Ascending aorta (tissue), 2 donors: ENCODE measurements at regions of chr11 and their contacts with region 1.

Region 1: DNA sequence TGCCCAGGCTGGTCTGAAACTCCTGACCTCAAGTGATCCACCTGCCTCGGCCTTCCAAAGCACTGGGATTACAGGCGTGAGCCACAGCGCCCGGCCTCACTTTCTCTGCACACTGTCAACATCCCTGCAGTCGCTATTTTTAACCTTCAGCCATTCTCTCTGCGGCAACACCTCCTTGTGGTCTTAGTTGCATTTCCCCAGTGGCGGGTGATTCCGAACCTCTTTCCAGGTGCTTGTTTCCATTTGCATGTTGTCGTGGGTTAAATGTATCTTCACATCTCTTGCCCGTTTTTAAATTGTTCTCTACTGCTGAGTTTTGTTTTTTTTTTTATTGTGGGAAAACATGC is 2.2 kb upstream of the SCT start:
- DNase-seq: no peak
- H3K4me3 ChIP-seq: peak overlapping the region in 1 of 2 donors; percentile 43
- H3K27ac ChIP-seq: peak overlapping the region; percentile 53 to 75
- H3K4me1 ChIP-seq: peaks cover 0 to 8% of the 10 kb centered on the region in 2 donors
- H3K27me3 ChIP-seq: no peaks in the 10 kb centered on the region
- CTCF ChIP-seq: peak in 2 of 3 experiments; percentile 7 to 42

Region 2: GRCh38 chr11:469684-470560 is 159.3 kb before region 1 on chr11:
- intact Hi-C with region 1: no loop called
- DNase-seq: peak in 1 of 2 donors; percentile 80
- H3K4me3 ChIP-seq: peak overlapping the region; percentile 26 to 51
- H3K27ac ChIP-seq: peak overlapping the region; percentile 65 to 78
- H3K4me1 ChIP-seq: peaks cover 4 to 13% of the 10 kb centered on the region in 2 donors
- H3K27me3 ChIP-seq: no peaks in the 10 kb centered on the region
- CTCF ChIP-seq: peak in 2 of 3 experiments; percentile 13 to 17

Region 3: DNA sequence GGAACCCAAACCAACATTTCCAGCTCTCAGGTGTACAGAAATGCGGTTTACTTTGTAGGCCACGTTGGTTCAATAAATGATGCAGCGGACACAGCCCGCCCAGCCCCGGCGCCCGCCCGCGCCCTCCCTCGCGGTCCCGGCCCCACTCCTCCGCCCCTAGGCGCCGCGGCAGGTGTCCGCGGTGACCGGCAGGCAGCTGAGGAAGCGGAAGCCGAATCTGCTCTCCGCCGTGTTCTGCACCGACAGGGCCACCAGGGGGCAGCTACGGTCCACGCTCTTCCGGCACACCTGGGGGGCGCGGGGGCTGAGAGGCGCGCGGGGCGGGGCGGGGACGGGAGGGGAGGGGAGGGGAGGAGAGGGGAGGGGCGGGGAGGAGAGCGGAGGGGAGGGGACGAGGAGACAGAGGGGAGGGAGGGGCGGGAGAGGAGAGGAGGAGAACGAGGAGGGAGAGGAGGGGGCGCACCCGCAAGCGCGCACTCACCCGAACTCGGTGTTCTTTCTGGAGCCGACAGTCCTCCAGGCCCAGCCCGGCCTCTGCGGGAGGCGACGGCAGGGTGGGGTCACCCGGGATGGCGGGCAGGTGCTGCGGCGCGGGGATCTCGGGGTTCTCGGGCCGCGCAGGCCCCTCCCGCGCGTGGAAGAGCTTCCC is 74.3 kb before region 1 on chr11:
- intact Hi-C with region 1: loop called (anchors 5 kb)
- DNase-seq: no peak
- H3K4me3 ChIP-seq: peak overlapping the region; percentile 37 to 48
- H3K27ac ChIP-seq: no peak overlapping the region
- H3K4me1 ChIP-seq: peaks cover 11 to 12% of the 10 kb centered on the region in 2 donors
- H3K27me3 ChIP-seq: peaks cover 25% of the 10 kb centered on the region
- CTCF ChIP-seq: peak; percentile 45 to 71 (median 64)

Region 4: DNA sequence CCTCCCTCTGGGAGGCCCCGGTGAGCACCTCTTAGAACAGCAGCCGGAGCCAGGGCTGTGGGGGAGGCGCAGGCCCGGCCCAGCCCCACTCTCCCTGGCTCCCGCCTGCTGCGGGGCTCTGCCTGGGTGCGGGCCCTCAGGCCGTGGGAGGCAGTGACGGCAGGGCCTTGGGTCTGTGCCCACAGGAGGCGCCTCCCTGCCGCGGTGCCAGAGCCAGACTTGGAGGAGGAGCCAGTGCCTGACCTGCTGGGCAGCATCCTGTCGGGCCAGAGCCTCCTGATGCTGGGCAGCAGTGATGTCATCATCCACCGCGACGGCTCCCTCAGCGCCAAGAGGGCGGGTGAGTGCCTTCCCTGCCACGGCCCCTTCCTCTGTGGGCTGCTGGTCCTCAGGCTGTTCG is 23.0 kb before region 1 on chr11:
- intact Hi-C with region 1: no loop called
- DNase-seq: no peak
- H3K4me3 ChIP-seq: no peak overlapping the region
- H3K27ac ChIP-seq: no peak overlapping the region
- H3K4me1 ChIP-seq: no peaks in the 10 kb centered on the region
- H3K27me3 ChIP-seq: no peaks in the 10 kb centered on the region
- CTCF ChIP-seq: no peak